ENCODE measurements at regions of chr7 and their contacts with region 1.

Region 1: GRCh38 chr7:45881759-45882464 is 6.4 kb upstream of the IGFBP1 start:
- DNase-seq: peak; percentile 50
- H3K4me3 ChIP-seq: no peak overlapping the region
- H3K27me3 ChIP-seq: no peaks in the 10 kb centered on the region
- CTCF ChIP-seq: no peak

Region 2: GRCh38 chr7:46032984-46033383 is 151.1 kb after region 1 on chr7:
- CTCF ChIA-PET with region 1: no interaction called
- POLR2A ChIA-PET with region 1: no interaction called
- DNase-seq: peak; percentile 80
- H3K4me3 ChIP-seq: no peak overlapping the region
- H3K27me3 ChIP-seq: no peaks in the 10 kb centered on the region
- CTCF ChIP-seq: no peak

Region 3: DNA sequence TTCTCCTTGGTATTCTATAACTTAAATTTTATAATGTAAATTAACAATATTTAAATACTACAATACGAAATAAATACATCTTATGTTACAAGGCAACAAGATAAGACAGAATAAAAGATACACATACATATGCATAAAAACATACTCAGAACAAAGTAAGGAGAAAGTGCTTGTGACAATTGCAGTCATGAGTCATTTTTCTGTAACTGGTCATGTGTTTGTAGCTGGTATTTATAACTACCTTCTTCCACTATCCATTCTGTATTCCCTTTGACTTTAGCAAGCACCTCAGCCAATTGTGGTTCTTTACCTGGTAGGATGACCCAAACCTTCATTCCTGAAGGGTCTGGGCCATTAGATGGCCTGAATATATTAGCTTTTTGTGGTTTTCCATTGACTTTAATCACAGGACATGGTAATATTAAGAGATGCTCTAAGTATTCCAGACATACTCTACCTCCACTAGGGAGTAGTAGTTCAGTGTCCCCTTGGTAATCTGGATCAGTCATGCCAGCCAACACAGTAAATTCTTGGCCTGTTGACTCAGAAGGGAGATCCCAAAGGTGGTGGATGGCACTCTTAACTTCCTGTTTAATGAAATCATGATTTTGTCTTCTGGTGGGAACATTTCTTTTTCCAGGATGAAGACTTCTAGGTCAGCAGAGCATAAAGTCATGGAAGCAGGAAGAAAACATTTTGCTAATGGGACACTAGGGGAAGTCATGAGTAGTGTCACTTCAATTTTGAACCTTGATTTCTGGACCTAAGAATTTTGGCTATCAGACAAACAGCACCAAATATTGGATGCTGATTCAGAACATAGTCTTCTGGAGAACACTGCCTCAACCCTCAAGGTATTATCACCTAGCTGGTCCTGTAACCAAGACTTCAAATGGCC is 772.9 kb after region 1 on chr7:
- CTCF ChIA-PET with region 1: no interaction called
- POLR2A ChIA-PET with region 1: interaction called, 11 read pairs
- DNase-seq: no peak
- H3K4me3 ChIP-seq: no peak overlapping the region
- H3K27me3 ChIP-seq: no peaks in the 10 kb centered on the region
- CTCF ChIP-seq: no peak